B cell (primary cell): ENCODE measurements at regions of chr6 and their contacts with region 1.

Region 1: GRCh38 chr6:4788953-4789584 is 12.9 kb downstream of the CDYL start:
- DNase-seq: peak; percentile 75
- ATAC-seq: peak; percentile 97
- H3K4me3 ChIP-seq: peak overlapping the region in 3 of 5 experiments; percentile 3 to 12 (median 12)
- H3K4me3 Mint-ChIP-seq: peak overlapping the region; percentile 70
- H3K27ac ChIP-seq: peak overlapping the region in 1 of 2 donors; percentile 44
- H3K27ac Mint-ChIP-seq: peak overlapping the region; percentile 17
- H3K4me1 ChIP-seq: peaks cover 20 to 21% of the 10 kb centered on the region in 2 donors
- H3K4me1 Mint-ChIP-seq: peaks cover 49% of the 10 kb centered on the region
- H3K27me3 ChIP-seq: no peaks in the 10 kb centered on the region
- H3K27me3 Mint-ChIP-seq: no peaks in the 10 kb centered on the region
- CTCF ChIP-seq: peak; percentile 71

Region 2: GRCh38 chr6:4801491-4802110 is 12.5 kb after region 1 on chr6:
- CTCF ChIA-PET with region 1: interaction called, 17 read pairs
- POLR2A ChIA-PET with region 1: no interaction called
- intact Hi-C with region 1: loop called (anchors 1 kb)
- DNase-seq: no peak
- ATAC-seq: peak; percentile 53
- H3K4me3 ChIP-seq: peak overlapping the region in 1 of 5 experiments; percentile 26
- H3K4me3 Mint-ChIP-seq: peak overlapping the region; percentile 14
- H3K27ac ChIP-seq: peak overlapping the region in 1 of 2 donors; percentile 18
- H3K27ac Mint-ChIP-seq: peak overlapping the region; percentile 33
- H3K4me1 ChIP-seq: peaks cover 33 to 44% of the 10 kb centered on the region in 2 donors
- H3K4me1 Mint-ChIP-seq: peaks cover 79% of the 10 kb centered on the region
- H3K27me3 ChIP-seq: no peaks in the 10 kb centered on the region
- H3K27me3 Mint-ChIP-seq: no peaks in the 10 kb centered on the region
- CTCF ChIP-seq: no peak

Region 3: DNA sequence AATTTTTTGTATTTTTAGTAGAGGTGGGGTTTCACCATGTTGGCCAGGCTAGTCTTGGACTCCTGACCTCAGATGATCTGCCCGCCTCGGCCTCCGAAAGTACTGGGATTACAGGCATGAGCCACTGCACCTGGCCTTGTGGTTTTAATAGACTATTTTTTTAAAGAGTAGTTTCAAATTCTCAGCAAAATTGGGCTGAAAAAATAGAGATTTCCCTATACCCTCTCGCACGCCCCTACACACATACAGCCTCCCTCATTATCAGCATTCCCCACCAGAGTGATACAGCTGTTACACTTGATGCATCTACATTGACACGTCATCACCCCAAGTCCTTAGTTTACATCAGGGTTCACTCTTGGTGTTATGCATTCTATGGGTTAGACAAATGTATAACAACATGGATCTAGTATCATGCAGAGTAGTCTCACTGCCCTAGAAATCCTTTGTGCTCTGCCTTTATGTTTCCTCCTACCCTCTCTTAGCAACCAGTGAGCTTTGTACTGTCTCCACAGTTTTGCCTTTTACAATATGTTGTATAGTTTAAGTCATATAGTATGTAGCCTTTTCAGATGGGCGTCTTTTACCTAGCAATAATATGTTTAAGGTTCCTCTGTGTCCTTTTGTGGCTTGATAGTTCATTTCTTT is 90.8 kb after region 1 on chr6:
- CTCF ChIA-PET with region 1: interaction called, 4 read pairs
- POLR2A ChIA-PET with region 1: no interaction called
- intact Hi-C with region 1: loop called (anchors 10 kb)
- DNase-seq: no peak
- ATAC-seq: no peak
- H3K4me3 ChIP-seq: no peak overlapping the region
- H3K4me3 Mint-ChIP-seq: peak overlapping the region; percentile 44
- H3K27ac ChIP-seq: no peak overlapping the region
- H3K27ac Mint-ChIP-seq: no peak overlapping the region
- H3K4me1 ChIP-seq: peaks cover 17 to 29% of the 10 kb centered on the region in 2 donors
- H3K4me1 Mint-ChIP-seq: peaks cover 60% of the 10 kb centered on the region
- H3K27me3 ChIP-seq: no peaks in the 10 kb centered on the region
- H3K27me3 Mint-ChIP-seq: no peaks in the 10 kb centered on the region
- CTCF ChIP-seq: no peak